Activated naive CD4-positive, alpha-beta T cell treated with anti-CD3 and anti-CD28 coated beads, Interleukin-2, amount 10 ng/mL, durations not matched to agents 7 days and 5 days (primary cell): ENCODE measurements at regions of chr3 and their contacts with region 1.

Region 1: GRCh38 chr3:113514265-113514769 is 639 bp downstream of the SPICE1 start:
- DNase-seq: no peak
- H3K4me3 Mint-ChIP-seq: no peak overlapping the region
- H3K27ac Mint-ChIP-seq: no peak overlapping the region
- H3K4me1 Mint-ChIP-seq: peaks cover 19% of the 10 kb centered on the region
- H3K27me3 Mint-ChIP-seq: peaks cover 19% of the 10 kb centered on the region

Region 2: DNA sequence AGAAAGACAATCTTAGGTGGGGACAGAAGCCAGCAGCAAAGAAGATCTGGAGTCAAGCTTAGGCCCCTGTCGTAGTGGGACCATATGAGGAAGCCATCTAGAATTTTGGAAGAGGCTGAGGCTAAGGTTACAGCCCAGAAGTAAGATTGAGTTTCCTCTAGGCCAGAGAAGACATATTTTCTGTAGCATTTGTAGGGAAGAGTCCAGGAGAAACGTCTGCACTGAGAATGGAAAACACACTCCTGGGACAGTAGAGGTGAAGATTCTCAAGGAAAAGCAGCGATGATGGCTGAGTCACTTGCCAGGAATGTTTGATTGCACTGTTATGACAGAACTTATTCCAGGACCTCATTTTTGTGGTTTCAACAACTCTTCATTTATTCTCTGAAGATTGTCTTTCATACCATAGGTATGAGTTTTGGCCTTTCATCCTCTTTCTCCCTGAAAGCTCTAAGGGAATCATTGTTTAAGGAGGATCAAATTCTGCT is 416.3 kb before region 1 on chr3:
- CTCF ChIA-PET with region 1: no interaction called
- DNase-seq: no peak
- H3K4me3 Mint-ChIP-seq: no peak overlapping the region
- H3K27ac Mint-ChIP-seq: no peak overlapping the region
- H3K4me1 Mint-ChIP-seq: no peaks in the 10 kb centered on the region
- H3K27me3 Mint-ChIP-seq: no peaks in the 10 kb centered on the region

Region 3: DNA sequence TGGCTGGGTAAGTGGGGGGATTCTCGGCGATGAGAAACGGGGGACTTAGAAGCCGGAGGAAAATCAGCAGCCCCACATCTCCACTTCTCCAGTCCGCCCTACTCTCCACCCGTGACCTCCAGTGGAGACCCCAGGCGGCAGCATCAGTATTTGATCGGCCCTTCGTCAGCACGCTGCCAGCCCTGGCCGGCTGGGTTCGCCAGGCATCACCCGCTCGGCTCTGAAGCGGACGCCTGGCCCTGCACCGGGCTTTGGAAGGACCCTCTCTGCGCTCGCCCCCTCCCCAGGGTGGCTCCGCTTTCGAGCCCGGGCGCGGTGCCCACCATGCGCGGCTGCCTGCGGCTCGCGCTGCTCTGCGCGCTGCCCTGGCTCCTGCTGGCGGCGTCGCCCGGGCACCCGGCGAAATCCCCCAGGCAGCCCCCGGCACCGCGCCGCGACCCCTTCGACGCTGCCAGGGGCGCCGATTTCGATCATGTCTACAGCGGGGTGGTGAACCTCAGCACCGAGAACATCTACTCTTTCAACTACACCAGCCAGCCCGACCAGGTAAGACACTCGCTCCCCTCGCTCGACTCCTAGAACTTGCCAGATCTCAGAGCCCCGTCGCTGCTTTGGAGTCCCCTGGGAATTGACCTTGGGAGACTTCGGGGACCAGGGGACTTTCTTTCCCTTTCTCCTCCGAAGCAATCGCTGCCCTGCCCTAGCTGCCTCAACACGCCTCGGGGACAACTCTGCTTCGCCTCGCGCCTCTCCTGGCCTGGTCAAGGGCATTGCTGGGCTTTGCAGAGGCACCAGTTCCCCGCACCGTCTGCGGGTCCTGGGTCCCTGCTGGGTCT is 18.6 kb after region 1 on chr3:
- CTCF ChIA-PET with region 1: interaction called, 14 read pairs
- DNase-seq: peak; percentile 61
- H3K4me3 Mint-ChIP-seq: peak overlapping the region; percentile 99
- H3K27ac Mint-ChIP-seq: peak overlapping the region; percentile 99
- H3K4me1 Mint-ChIP-seq: peaks cover 51% of the 10 kb centered on the region
- H3K27me3 Mint-ChIP-seq: peaks cover 15% of the 10 kb centered on the region